ENCODE measurements at regions of chr5 and their contacts with region 1.

Region 1: GRCh38 chr5:131109540-131110255 is 55.4 kb downstream of the HINT1 start:
- DNase-seq: peak; percentile 35
- ATAC-seq: peak; percentile 90
- H3K4me3 ChIP-seq: no peak overlapping the region
- H3K27ac ChIP-seq: no peak overlapping the region
- H3K4me1 ChIP-seq: peaks cover 2% of the 10 kb centered on the region in 2 experiments; a peak in 2 of 4 replicates
- H3K27me3 ChIP-seq: no peaks in the 10 kb centered on the region
- CTCF ChIP-seq: peak; percentile 67 to 83 (median 72)
- POLR2A ChIP-seq: no peak
- RAD21 ChIP-seq: peak; percentile 83

Region 2: GRCh38 chr5:130109152-130109551 is 1000.5 kb before region 1 on chr5:
- CTCF ChIA-PET with region 1: no interaction called
- POLR2A ChIA-PET with region 1: no interaction called
- RAD21 ChIA-PET with region 1: no interaction called
- intact Hi-C with region 1: loop called (anchors 1 kb)
- DNase-seq: peak; percentile 34
- ATAC-seq: peak; percentile 69; the same call in 1 of the 2 replicates
- H3K4me3 ChIP-seq: no peak overlapping the region
- H3K27ac ChIP-seq: no peak overlapping the region
- H3K4me1 ChIP-seq: no peaks in the 10 kb centered on the region
- H3K27me3 ChIP-seq: no peaks in the 10 kb centered on the region
- CTCF ChIP-seq: peak; percentile 55 to 76 (median 62); a peak in 5 of 6 replicates
- POLR2A ChIP-seq: no peak
- RAD21 ChIP-seq: peak; percentile 79

Region 3: DNA sequence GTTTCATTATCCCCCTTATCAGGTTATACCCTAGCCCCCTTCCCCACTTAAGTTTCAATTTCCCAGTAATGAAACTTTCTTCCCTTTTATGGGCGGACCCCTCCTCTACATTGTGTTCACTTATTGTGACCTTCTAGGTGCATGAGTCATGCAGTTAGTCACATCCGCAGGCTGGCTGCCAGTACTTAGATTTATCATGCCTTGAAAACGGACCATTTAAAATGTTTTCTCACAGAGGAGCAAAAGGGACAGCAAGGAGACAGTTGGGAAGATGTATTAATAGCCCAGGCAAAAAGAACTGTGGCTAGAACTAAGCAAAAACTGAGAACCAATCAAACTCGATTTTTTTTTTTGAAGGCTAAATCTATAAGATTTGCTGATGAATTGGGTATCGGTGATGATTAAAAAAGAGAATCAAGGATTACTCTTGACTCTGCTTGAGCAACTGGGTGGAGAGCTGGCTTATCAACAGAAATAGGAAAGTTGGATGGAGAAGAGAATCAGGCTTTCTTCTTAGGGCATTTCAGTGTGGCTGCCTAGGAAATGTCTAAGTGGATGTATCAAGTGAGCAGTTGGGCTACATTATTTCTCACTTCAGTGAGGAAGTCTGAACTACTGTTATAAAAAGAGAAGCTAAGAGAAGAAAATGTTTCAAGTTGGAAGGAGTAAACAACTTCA is 559.7 kb before region 1 on chr5:
- CTCF ChIA-PET with region 1: no interaction called
- POLR2A ChIA-PET with region 1: no interaction called
- RAD21 ChIA-PET with region 1: no interaction called
- intact Hi-C with region 1: loop called (anchors 10 kb)
- DNase-seq: peak; percentile 66
- ATAC-seq: peak; percentile 85
- H3K4me3 ChIP-seq: peak overlapping the region in 1 of 2 experiments; percentile 36; a peak in 2 of 4 replicates
- H3K27ac ChIP-seq: peak overlapping the region; percentile 53; the same call in 1 of the 2 replicates
- H3K4me1 ChIP-seq: peaks cover 24 to 53% of the 10 kb centered on the region in 2 experiments
- H3K27me3 ChIP-seq: no peaks in the 10 kb centered on the region
- CTCF ChIP-seq: no peak
- POLR2A ChIP-seq: no peak
- RAD21 ChIP-seq: no peak

Region 4: DNA sequence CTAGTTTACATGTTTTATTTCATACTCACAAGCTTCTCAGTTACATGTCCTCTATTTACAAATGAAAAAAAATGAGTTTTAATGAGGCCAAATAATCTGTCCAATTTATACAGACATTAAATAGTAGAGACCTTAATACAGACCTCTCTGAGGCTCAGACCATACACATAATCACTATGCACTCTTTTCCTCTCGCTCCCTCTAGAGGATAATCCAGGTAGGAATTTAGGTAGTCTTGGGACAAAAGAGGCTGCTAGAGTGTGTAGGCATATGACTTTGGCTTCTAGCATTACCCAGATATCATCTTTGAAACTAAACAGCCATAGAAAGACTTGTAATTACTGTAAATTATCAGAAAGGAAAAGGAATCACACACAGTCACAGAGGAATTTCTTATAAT is 389.3 kb before region 1 on chr5:
- CTCF ChIA-PET with region 1: no interaction called
- POLR2A ChIA-PET with region 1: no interaction called
- RAD21 ChIA-PET with region 1: no interaction called
- intact Hi-C with region 1: loop called (anchors 10 kb)
- DNase-seq: peak; percentile 45
- ATAC-seq: peak; percentile 100
- H3K4me3 ChIP-seq: no peak overlapping the region
- H3K27ac ChIP-seq: no peak overlapping the region
- H3K4me1 ChIP-seq: no peaks in the 10 kb centered on the region
- H3K27me3 ChIP-seq: no peaks in the 10 kb centered on the region
- CTCF ChIP-seq: peak; percentile 56 to 74 (median 69); a peak in 5 of 6 replicates
- POLR2A ChIP-seq: no peak
- RAD21 ChIP-seq: peak; percentile 88

Region 5: GRCh38 chr5:130871346-130872086 is 238.2 kb before region 1 on chr5:
- CTCF ChIA-PET with region 1: no interaction called
- POLR2A ChIA-PET with region 1: no interaction called
- RAD21 ChIA-PET with region 1: no interaction called
- intact Hi-C with region 1: loop called (anchors 1 kb)
- DNase-seq: peak; percentile 29
- ATAC-seq: peak; percentile 85
- H3K4me3 ChIP-seq: no peak overlapping the region
- H3K27ac ChIP-seq: no peak overlapping the region
- H3K4me1 ChIP-seq: no peaks in the 10 kb centered on the region
- H3K27me3 ChIP-seq: no peaks in the 10 kb centered on the region
- CTCF ChIP-seq: peak; percentile 65 to 77 (median 76)
- POLR2A ChIP-seq: no peak
- RAD21 ChIP-seq: peak; percentile 64

Region 6: DNA sequence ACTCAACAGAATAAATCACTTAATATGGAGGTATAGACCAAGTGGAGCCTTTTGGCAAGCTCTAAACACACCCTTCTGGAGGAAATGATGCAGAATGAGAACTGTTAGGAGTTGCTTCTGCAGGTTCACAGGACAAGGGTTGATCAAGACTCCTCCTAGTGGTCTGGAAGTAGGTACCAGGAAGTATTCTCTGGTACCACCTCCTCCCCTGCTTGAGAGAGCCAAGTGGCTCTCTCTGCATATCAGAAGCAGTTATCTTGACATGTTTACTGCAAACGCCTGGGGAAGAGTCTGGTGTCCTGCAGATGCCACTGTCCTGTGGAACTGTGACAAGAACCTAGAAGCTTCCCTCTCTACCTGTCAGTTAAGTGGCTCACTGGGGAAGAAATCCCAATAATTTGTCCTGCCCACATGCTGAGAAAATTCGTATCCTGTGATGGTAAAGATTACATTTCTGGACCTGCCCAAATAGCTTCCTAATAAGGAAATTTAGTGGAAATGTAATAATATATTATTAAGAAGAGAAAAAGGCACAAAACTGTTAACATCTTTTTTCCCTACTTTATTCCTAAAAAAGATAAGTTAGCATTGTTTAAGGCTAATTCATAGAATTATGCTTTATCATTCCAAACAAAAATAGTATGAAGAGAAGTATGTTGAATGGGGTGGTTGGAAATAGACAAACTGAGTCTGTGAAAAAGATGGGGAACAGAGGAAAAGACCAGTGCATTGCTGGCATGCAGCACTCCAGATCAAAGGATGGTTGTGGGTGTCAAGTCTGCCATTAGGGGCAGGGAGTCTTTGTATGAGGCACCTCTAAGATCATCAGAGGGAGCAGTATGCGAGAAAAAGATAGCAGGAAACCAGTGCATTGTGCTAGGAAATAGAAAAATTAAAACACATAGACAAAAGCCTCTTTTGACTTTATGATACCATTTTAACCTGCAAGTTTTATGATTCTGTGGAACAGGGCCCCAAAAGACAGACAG is 273.0 kb after region 1 on chr5:
- CTCF ChIA-PET with region 1: interaction called, 3 read pairs
- POLR2A ChIA-PET with region 1: no interaction called
- RAD21 ChIA-PET with region 1: no interaction called
- intact Hi-C with region 1: loop called (anchors 5 kb)
- DNase-seq: peak; percentile 50
- ATAC-seq: peak; percentile 97
- H3K4me3 ChIP-seq: no peak overlapping the region
- H3K27ac ChIP-seq: no peak overlapping the region
- H3K4me1 ChIP-seq: peaks cover 2 to 9% of the 10 kb centered on the region in 2 experiments; a peak in 2 of 4 replicates
- H3K27me3 ChIP-seq: no peaks in the 10 kb centered on the region
- CTCF ChIP-seq: peak; percentile 51 to 72 (median 67); a peak in 5 of 6 replicates
- POLR2A ChIP-seq: no peak
- RAD21 ChIP-seq: peak; percentile 83